Body of pancreas (tissue), 4 donors: ENCODE measurements at regions of chr7 and their contacts with region 1.

Region 1: GRCh38 chr7:4799508-4800268 is 24.3 kb downstream of the AP5Z1 start:
- DNase-seq: no peak
- ATAC-seq: peak; percentile 10
- H3K4me3 ChIP-seq: no peak overlapping the region
- H3K27ac ChIP-seq: no peak overlapping the region
- H3K4me1 ChIP-seq: no peaks in the 10 kb centered on the region
- H3K27me3 ChIP-seq: no peaks in the 10 kb centered on the region
- CTCF ChIP-seq: no peak
- POLR2A ChIP-seq: no peak

Region 2: DNA sequence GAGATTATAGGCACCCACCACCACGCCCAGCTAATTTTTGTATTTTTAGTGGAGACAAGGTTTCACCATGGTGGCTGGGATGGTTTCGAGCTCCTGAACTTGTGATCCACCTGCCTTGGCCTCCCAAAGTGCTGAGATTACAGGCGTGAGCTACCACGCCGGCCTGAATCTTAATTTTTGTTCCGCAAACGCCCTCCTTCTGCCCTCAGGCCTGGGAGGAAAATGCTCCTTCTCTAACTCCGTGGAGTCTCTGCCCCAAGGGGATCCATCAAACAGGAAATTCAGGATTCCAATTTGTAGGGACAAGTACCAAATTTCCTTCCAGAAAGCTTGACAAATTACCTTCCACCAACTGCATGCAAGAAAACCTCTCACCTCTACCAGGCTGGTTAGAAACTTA is 289.2 kb after region 1 on chr7:
- intact Hi-C with region 1: loop called (anchors 5 kb)
- DNase-seq: no peak
- ATAC-seq: no peak
- H3K4me3 ChIP-seq: no peak overlapping the region
- H3K27ac ChIP-seq: no peak overlapping the region
- H3K4me1 ChIP-seq: peaks cover 4% of the 10 kb centered on the region
- H3K27me3 ChIP-seq: no peaks in the 10 kb centered on the region
- CTCF ChIP-seq: no peak
- POLR2A ChIP-seq: no peak